Activated CD4-positive, alpha-beta T cell treated with anti-CD3 and anti-CD28 coated beads for 36 hours (primary cell): ENCODE measurements at regions of chr4 and their contacts with region 1.

Region 1: GRCh38 chr4:145936142-145936996 is 2.3 kb downstream of the ZNF827 start:
- DNase-seq: peak; percentile 77
- ATAC-seq: peak; percentile 41
- H3K4me3 Mint-ChIP-seq: peak overlapping the region; percentile 97
- H3K27ac Mint-ChIP-seq: peak overlapping the region; percentile 93
- H3K4me1 Mint-ChIP-seq: peaks cover 54% of the 10 kb centered on the region
- H3K27me3 Mint-ChIP-seq: no peaks in the 10 kb centered on the region

Region 2: DNA sequence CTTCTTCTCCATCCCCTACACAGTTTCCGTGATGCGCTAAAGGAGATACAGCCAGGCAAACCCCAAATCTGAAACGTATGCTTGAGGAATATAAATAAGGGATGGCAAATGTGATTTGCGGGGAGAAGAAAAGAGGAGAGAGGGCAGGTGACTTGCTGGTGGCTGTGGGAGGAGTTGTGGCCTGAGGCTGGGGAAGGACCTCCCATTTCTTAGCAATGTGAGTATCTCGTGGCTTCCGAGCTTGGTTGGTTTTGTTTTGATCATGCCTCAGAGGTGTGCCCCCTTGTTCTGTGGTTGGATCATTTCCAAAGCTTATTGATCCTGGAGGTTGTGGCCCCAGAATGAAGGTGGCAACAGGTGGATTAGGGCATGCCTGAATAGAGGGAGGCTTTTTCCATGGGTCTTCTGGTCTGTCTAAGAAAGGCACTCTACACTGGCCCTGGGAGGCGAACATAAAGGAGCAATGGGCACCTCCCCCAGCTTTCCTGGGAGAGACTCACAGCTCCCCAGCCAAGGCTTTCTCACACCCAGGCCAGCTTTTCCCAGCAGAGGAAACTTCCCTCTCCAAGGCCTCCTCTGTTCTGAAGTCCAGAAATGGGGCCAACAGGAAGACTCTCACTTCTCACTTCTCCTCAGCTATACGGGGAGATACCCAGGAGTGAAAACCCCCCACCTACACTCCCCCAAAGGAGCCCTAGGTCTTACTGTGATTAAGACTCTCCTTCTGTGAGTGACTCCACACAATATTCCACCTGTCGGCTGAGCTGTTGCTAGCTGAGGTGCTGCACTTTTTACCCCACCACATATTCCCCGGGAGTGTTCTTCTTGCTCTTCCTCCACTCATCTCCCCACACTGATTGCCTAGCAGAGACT is 216.4 kb before region 1 on chr4:
- CTCF ChIA-PET with region 1: no interaction called
- POLR2A ChIA-PET with region 1: no interaction called
- intact Hi-C with region 1: loop called in 1 of 2 experiments (anchors 5 kb)
- DNase-seq: peak; percentile 76
- ATAC-seq: peak; percentile 90
- H3K4me3 Mint-ChIP-seq: peak overlapping the region; percentile 12
- H3K27ac Mint-ChIP-seq: peak overlapping the region; percentile 67
- H3K4me1 Mint-ChIP-seq: peaks cover 15% of the 10 kb centered on the region
- H3K27me3 Mint-ChIP-seq: peaks cover 22% of the 10 kb centered on the region

Region 3: GRCh38 chr4:145732895-145733880 is 203.2 kb before region 1 on chr4:
- CTCF ChIA-PET with region 1: no interaction called
- POLR2A ChIA-PET with region 1: no interaction called
- intact Hi-C with region 1: loop called in 1 of 2 experiments (anchors 1 kb)
- DNase-seq: peak; percentile 92
- ATAC-seq: peak; percentile 92
- H3K4me3 Mint-ChIP-seq: peak overlapping the region; percentile 65
- H3K27ac Mint-ChIP-seq: peak overlapping the region; percentile 56
- H3K4me1 Mint-ChIP-seq: peaks cover 23% of the 10 kb centered on the region
- H3K27me3 Mint-ChIP-seq: no peaks in the 10 kb centered on the region

Region 4: DNA sequence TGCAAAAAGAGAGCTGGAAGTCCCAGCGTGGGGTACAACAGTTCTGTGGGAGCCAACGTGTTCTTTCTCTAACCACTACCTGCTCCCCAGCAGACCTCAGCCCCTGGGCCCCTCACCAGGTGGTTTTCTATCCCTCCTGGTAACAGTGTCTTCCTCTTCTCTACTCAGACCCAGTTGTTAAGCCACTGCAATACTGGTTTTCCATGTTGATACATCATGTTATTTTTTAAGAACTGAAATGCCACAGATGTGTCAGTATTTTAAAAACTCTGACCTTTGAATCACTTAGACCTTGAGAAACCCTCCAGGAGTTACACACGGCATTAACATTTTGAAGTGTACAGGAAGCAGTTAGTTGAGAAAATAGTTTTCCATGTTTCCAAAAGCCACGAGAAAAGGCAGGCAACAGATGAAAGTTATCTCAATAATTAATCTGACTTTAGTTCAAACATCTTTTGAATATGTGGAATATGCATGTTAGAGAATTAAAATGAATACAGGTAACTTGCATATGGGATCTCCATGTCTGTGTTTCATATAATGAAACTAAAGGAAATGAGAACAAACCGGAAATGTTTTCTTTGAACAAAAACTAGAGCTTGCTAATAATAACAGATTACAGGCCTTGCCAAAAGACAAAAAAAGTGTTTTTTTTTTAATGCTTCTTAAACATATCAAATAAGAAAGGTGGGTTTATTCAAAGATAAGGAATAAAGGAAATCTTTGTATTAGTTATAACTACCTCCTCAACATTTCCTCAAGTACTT is 106.6 kb before region 1 on chr4:
- CTCF ChIA-PET with region 1: no interaction called
- POLR2A ChIA-PET with region 1: no interaction called
- intact Hi-C with region 1: loop called (anchors 5 kb)
- DNase-seq: peak; percentile 68
- ATAC-seq: peak; percentile 68
- H3K4me3 Mint-ChIP-seq: peak overlapping the region; percentile 43
- H3K27ac Mint-ChIP-seq: peak overlapping the region; percentile 77
- H3K4me1 Mint-ChIP-seq: peaks cover 44% of the 10 kb centered on the region
- H3K27me3 Mint-ChIP-seq: no peaks in the 10 kb centered on the region

Region 5: DNA sequence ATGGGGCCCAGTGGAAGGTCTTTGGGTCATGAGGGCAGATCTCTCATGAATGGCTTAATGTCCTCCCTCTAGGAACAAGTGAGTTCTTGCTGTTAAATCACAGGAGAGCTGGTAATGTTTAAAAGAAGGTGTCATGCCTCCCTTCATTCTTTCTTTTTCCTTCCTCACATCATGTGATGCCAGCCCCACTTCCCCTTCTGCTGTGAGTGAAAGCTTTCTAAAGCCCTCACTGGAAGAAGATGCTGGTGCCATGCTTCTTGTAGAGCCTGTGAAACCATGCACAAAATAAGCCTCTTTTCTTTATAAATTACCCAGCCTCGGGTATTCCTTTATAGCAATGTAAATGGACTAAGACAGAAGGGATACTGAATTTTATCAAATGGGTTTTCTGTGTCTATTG is 68.4 kb after region 1 on chr4:
- CTCF ChIA-PET with region 1: no interaction called
- POLR2A ChIA-PET with region 1: no interaction called
- intact Hi-C with region 1: no loop called
- DNase-seq: no peak
- ATAC-seq: no peak
- H3K4me3 Mint-ChIP-seq: no peak overlapping the region
- H3K27ac Mint-ChIP-seq: no peak overlapping the region
- H3K4me1 Mint-ChIP-seq: peaks cover 3% of the 10 kb centered on the region
- H3K27me3 Mint-ChIP-seq: peaks cover 23% of the 10 kb centered on the region

Region 6: DNA sequence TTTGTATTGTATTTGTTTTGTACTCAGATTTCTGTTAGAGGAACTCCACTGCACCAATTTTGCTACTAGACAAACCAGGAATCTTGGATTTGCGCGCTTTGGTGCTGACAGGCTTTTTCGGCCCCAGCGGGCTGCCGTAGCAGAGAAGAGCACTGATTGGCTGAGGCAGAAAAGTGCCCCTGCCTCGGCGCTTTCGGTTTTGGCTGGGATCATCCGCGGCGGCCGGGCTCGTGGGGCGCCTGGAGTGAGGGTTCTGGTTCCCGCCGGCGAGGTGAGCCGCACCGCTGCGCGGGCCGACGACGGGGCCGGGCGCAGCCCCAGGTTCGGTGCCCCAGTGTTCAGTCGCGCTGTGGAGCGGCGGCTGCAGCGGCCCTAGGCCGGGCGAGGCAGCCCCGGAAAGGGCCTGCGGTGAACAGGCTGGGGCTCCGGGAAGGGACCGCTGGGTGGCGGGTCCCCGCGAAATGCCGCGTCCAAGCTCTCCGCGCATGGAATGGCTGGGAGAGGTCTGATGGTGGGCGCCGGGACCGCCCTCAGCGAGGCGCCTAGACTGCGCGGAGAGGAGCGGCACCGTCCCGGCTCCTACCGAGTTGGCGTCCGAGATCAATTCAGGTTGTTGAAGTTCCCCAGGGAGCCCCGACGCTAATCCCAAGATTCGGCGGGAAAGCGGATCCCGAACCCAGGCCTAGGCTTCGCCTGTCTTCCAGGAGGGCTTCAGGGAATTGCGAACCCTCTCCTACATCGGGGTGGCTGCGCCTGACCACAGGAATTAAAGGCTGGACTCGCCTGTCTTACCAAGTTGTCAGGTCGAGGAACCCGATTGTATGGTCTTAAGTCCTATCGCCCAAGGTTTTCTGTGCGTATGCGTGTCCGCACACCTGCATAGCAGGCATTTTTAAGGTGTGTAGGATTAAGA is 239.4 kb after region 1 on chr4 and contains the start of gene LSM6:
- CTCF ChIA-PET with region 1: no interaction called
- POLR2A ChIA-PET with region 1: no interaction called
- intact Hi-C with region 1: loop called (anchors 1 to 5 kb)
- DNase-seq: peak; percentile 91
- ATAC-seq: peak; percentile 94
- H3K4me3 Mint-ChIP-seq: peak within 1 kb of the TSS; percentile 82
- H3K27ac Mint-ChIP-seq: peak within 1 kb of the TSS; percentile 85
- H3K4me1 Mint-ChIP-seq: peaks cover 49% of the 10 kb centered on the region
- H3K27me3 Mint-ChIP-seq: no peaks in the 10 kb centered on the region
- total RNA-seq, gene LSM6: 64.9 to 66.9 TPM

Region 7: DNA sequence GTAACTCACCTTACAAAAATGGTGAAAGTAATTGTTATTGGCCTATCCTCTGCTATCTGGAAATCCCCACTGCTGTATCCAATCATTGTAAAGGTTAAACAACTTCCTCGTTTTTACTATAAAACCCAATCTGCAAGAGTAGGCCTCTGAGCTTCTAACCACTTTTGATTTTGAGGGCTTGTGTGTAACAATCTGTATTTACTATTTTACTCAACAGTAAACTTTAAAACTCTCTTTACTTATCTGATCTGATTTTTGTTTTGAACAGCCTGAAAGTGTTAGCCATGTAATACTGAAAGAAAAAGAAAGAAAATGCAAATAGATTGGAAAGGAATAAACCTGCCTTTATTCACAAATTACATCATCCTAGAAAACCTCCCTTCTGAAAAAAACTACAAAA is 522.2 kb after region 1 on chr4:
- CTCF ChIA-PET with region 1: no interaction called
- POLR2A ChIA-PET with region 1: no interaction called
- intact Hi-C with region 1: loop called in 1 of 2 experiments (anchors 10 kb)
- DNase-seq: no peak
- ATAC-seq: peak; percentile 96
- H3K4me3 Mint-ChIP-seq: peak overlapping the region; percentile 62
- H3K27ac Mint-ChIP-seq: peak overlapping the region; percentile 93
- H3K4me1 Mint-ChIP-seq: peaks cover 24% of the 10 kb centered on the region
- H3K27me3 Mint-ChIP-seq: no peaks in the 10 kb centered on the region

Region 8: DNA sequence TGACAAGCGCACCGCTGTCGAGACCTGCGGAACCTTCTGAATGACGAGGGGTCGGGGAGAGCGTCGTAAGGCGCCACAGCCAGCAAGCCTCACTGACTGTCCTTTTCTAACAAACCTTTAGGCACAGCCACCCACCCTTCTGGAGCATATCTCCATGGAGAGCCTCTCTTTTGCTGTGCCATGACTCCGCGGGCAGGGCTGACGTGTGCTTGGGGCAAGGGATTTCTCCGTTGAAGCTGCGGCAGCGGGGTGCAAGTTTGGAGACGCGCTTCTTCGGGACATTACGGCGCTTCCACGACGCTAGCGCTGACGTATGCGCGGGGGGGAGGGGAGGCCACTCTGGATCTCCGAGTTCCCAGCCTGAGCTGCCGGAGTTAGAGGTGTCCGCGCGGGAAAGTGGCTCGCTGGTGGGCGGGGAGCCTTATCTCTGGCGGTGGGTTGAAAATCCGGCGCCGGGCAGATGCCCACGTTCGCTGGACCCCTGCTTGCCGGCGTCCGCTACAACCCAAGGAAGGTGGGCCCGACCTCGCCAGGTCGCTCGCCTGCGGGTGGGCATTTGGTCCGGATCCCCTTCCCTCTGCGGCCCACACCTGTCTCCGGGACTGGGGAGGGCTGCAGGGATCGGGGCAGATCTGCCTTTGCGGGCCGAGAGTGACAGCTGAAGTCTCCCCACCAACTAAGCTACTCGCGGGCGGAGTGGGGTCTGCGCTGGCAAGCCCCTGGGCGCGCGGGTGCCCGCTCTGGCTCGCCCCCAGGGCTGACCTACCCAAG is 585.9 kb after region 1 on chr4:
- CTCF ChIA-PET with region 1: no interaction called
- POLR2A ChIA-PET with region 1: no interaction called
- intact Hi-C with region 1: loop called in 1 of 2 experiments (anchors 5 kb)
- DNase-seq: peak; percentile 91
- ATAC-seq: peak; percentile 77
- H3K4me3 Mint-ChIP-seq: no peak overlapping the region
- H3K27ac Mint-ChIP-seq: no peak overlapping the region
- H3K4me1 Mint-ChIP-seq: peaks cover 27% of the 10 kb centered on the region
- H3K27me3 Mint-ChIP-seq: no peaks in the 10 kb centered on the region